Ovary (tissue), 10 donors: ENCODE measurements at regions of chr2 and their contacts with region 1.

Region 1: GRCh38 chr2:26144953-26145680 is 27.8 kb upstream of the GAREM2 start:
- DNase-seq: peak; percentile 28 to 73 (median 65)
- H3K4me3 ChIP-seq: no peak overlapping the region
- H3K27ac ChIP-seq: no peak overlapping the region
- H3K4me1 ChIP-seq: no peaks in the 10 kb centered on the region
- H3K27me3 ChIP-seq: no peaks in the 10 kb centered on the region
- CTCF ChIP-seq: peak; percentile 52 to 71 (median 69)
- EP300 ChIP-seq: no peak
- POLR2A ChIP-seq: no peak

Region 2: DNA sequence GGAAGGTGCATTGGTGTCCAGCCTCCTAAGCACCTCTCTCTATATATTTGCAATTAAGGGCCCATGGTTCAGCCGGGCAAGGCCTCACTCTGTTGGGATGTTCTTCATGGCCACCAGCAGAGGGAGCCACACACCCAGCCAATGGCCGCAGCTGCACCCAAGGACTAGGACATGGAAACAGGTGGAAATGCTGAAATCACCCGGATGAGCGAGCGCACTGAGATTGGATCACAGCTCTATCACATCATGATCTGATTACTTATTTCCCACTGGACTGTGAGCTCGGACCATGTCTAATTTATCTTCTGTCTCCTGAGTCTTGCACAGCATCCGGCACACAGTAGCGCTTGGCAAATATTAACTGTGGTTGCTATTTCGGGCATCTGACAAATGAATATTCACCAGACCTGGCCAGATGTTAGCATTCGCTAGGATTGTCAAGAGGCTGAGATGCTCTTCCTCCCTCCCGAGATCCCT is 194.0 kb before region 1 on chr2:
- intact Hi-C with region 1: loop called (anchors 2 to 10 kb)
- DNase-seq: peak; percentile 64 to 84 (median 81)
- H3K4me3 ChIP-seq: no peak overlapping the region
- H3K27ac ChIP-seq: no peak overlapping the region
- H3K4me1 ChIP-seq: no peaks in the 10 kb centered on the region
- H3K27me3 ChIP-seq: no peaks in the 10 kb centered on the region
- CTCF ChIP-seq: peak; percentile 75 to 87 (median 82)
- EP300 ChIP-seq: no peak
- POLR2A ChIP-seq: no peak

Region 3: DNA sequence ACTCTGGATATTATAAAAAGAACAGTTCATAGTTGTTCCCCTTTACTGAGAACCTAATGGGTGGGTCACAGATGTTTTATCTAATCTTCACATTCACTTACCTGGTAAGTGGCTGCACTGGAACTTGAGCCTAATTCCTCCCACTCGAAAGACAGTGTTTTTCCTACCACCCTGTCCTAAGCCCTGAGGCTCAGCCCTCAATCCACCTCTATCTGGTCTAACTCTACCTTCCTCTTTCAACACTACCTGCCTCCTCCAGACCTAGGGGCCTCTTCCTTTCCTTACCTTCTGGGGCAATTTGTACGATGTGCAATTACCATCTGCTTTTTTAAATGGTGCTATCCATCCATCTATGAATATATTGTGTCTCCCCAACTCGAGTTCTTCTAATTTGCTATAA is 153.2 kb before region 1 on chr2:
- intact Hi-C with region 1: loop called in 3 of 4 experiments (anchors 5 to 10 kb)
- DNase-seq: no peak
- H3K4me3 ChIP-seq: no peak overlapping the region
- H3K27ac ChIP-seq: no peak overlapping the region
- H3K4me1 ChIP-seq: no peaks in the 10 kb centered on the region
- H3K27me3 ChIP-seq: no peaks in the 10 kb centered on the region
- CTCF ChIP-seq: no peak
- EP300 ChIP-seq: no peak
- POLR2A ChIP-seq: no peak

Region 4: GRCh38 chr2:26122630-26123029 is 22.5 kb before region 1 on chr2:
- intact Hi-C with region 1: no loop called
- DNase-seq: no peak
- H3K4me3 ChIP-seq: no peak overlapping the region
- H3K27ac ChIP-seq: no peak overlapping the region
- H3K4me1 ChIP-seq: no peaks in the 10 kb centered on the region
- H3K27me3 ChIP-seq: no peaks in the 10 kb centered on the region
- CTCF ChIP-seq: no peak
- EP300 ChIP-seq: no peak
- POLR2A ChIP-seq: no peak